ENCODE measurements at regions of chr12 and their contacts with region 1.

Region 1: DNA sequence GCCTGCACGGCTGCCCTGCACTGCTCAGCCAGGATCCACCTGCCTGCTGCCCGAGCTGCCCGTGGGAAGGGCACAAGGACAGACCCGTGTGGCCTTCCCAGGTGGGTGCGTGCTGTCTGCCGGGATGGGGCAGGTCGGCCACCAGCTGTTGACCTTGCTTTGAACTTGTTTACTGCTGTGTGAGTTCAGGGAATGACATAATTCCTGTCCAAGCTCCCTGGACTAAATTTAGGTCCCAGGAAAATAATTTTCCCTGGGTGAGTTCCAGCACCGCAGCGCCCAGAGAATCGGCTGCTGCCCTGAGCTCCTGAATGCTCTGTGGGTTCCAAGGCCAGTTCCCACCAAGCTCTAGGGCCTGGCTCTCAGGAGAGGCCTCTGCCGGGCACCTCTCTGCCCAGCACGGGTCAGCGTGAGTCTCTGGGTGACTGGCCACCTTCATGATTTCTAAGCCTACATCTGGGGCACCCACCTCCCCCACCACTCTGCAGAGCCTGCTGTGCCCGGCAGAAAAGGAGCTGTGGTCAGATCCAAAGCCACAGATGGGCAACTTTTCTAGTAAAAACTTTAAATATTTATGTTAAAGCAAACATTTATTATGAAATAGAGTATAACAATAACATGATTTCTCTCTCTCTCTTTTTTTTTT is 27.2 kb upstream of the MLXIP start:
- DNase-seq: peak in 1 of 2 donors; percentile 59
- ATAC-seq: peak; percentile 61
- H3K4me3 ChIP-seq: no peak overlapping the region
- H3K27ac ChIP-seq: peak overlapping the region; percentile 7 to 73
- H3K4me1 ChIP-seq: no peaks in the 10 kb centered on the region
- H3K27me3 ChIP-seq: no peaks in the 10 kb centered on the region

Region 2: DNA sequence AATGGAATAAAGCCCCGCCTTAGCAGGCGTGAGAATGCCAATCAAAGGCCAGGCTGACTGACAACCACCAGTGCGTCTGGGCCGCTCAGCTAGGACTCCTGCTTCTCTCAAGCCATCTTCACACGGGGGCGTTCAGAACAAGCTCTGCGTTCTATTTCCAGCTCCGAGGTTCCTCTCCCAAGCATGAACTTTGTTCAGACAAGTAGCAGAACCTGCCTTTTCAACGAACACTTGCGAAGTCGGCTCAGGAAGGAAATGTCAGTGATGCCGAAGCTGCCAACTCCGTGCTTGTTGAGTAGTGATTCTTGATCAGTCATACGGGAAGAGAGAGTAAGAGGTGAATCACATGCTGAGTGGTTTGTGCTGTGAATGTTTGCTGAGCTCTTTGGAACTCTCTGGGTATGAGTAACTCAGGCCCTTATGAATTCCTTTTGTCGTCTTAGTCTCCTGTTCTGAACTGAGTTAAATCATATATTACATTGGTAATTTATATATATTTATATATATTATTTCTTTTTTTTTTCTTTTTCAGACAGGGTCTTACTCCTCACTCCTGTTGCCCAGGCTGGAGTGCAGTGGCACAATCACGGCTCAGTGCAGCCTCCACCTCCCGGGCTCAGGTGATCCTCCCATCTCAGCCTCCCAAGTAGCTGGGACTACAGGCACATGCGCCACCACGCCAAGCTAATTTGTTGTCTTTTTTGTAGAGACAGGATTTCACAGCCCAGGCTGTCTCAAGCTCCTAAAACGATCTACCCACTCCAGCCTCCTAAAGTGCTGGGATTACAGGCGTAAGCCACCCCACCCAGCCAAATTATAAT is 59.1 kb before region 1 on chr12:
- intact Hi-C with region 1: no loop called
- DNase-seq: peak in 1 of 2 donors; percentile 38
- ATAC-seq: no peak
- H3K4me3 ChIP-seq: no peak overlapping the region
- H3K27ac ChIP-seq: no peak overlapping the region
- H3K4me1 ChIP-seq: peaks cover 1 to 6% of the 10 kb centered on the region in 2 donors
- H3K27me3 ChIP-seq: no peaks in the 10 kb centered on the region

Region 3: GRCh38 chr12:122123051-122123760 is 71.9 kb after region 1 on chr12:
- intact Hi-C with region 1: loop called (anchors 1 to 2 kb)
- DNase-seq: peak; percentile 76 to 82
- ATAC-seq: peak; percentile 77
- H3K4me3 ChIP-seq: no peak overlapping the region
- H3K27ac ChIP-seq: no peak overlapping the region
- H3K4me1 ChIP-seq: peaks cover 0 to 3% of the 10 kb centered on the region in 2 donors
- H3K27me3 ChIP-seq: no peaks in the 10 kb centered on the region